Cardiac septum (tissue), 1 donor: ENCODE measurements at regions of chr7 and their contacts with region 1.

Region 1: GRCh38 chr7:39458061-39458745 is 108.0 kb upstream of the YAE1 start:
- DNase-seq: no peak

Region 2: DNA sequence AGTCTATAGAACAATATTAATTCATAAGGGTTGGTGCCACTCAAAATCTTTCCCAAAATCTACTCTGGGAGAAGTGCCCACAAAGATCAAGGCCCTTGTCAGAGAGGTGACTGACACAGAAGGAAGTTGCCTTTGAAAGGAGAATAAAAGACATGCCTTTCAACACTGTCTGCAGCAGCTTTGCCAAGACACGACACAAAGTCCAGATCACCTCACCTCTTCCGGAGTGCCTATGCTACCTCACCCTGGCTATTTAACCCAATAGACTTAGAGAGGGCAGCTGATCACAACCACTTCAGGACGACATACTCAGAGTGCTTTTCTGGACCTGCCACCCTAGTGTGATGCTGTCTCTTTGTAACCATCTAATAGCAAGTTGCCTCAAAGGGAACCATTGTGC is 59.0 kb after region 1 on chr7:
- intact Hi-C with region 1: loop called (anchors 5 kb)
- DNase-seq: no peak